Activated naive CD4-positive, alpha-beta T cell treated with anti-CD3 and anti-CD28 coated beads for 36 hours (primary cell): ENCODE measurements at regions of chr9 and their contacts with region 1.

Region 1: DNA sequence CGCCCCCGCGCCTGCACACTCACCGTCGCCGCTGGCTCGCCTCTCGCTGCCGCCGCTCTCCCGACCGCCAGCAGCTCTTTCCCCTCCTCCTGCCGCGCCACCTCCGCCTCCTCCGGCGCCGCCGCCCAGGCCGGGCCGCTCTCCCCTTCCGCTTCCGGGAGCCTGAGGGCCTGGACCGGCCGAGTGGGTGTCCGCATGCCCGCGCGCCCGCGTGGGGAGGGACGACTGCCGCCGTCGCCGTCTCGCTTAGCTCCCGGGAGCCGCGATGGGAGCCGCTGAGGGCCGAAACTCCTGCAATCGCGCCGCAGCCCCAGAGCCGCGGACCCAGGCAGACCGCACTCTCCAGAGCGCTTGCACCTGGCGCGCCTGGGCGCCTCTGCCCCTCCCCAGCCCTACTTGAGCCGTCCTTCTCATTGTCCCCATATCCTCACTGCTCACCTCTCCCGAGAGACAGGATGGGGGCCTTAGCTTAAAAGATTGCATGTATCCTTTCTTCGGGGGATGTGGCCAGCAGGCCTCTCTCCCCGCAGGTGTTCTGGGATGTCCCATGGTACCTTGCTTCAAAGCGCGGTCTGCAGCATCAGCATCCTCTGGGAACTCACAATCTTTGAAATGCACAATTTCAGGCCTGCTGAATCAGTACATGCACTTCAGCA is at the start of gene ZDHHC21:
- DNase-seq: peak; percentile 62
- H3K4me3 Mint-ChIP-seq: peak within 1 kb of the TSS; percentile 89
- H3K27ac Mint-ChIP-seq: peak within 1 kb of the TSS; percentile 79
- H3K4me1 Mint-ChIP-seq: peaks cover 31% of the 10 kb centered on the region
- H3K27me3 Mint-ChIP-seq: peaks cover 8% of the 10 kb centered on the region
- total RNA-seq, gene ZDHHC21: 3.5 to 3.8 TPM

Region 2: GRCh38 chr9:14322211-14323082 is 370.9 kb before region 1 on chr9:
- CTCF ChIA-PET with region 1: no interaction called
- intact Hi-C with region 1: loop called (anchors 2 kb)
- DNase-seq: peak; percentile 82
- H3K4me3 Mint-ChIP-seq: peak overlapping the region; percentile 77
- H3K27ac Mint-ChIP-seq: no peak overlapping the region
- H3K4me1 Mint-ChIP-seq: peaks cover 8% of the 10 kb centered on the region
- H3K27me3 Mint-ChIP-seq: peaks cover 42% of the 10 kb centered on the region

Region 3: GRCh38 chr9:14616188-14616982 is 76.9 kb before region 1 on chr9:
- CTCF ChIA-PET with region 1: no interaction called
- intact Hi-C with region 1: loop called (anchors 2 kb)
- DNase-seq: no peak
- H3K4me3 Mint-ChIP-seq: no peak overlapping the region
- H3K27ac Mint-ChIP-seq: no peak overlapping the region
- H3K4me1 Mint-ChIP-seq: no peaks in the 10 kb centered on the region
- H3K27me3 Mint-ChIP-seq: no peaks in the 10 kb centered on the region

Region 4: DNA sequence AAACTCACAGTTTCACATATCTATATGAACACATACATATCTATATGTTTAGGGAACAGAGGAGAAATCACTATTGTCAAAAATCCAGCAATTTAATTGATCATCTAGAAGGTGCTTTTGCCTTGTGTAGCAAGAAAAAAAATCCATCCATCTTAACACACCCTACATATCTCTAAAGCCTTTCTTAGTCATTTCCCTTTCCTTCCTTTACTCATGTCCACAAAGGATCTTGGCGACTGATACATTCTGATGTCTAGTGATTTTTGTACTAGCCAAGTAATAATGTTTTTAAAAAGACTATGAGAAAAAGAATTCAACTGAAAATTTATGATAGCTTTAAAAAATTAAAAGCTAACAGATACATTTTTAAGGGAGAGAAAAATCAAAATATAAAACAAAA is 22.6 kb before region 1 on chr9:
- CTCF ChIA-PET with region 1: no interaction called
- intact Hi-C with region 1: loop called (anchors 2 kb)
- DNase-seq: no peak
- H3K4me3 Mint-ChIP-seq: no peak overlapping the region
- H3K27ac Mint-ChIP-seq: no peak overlapping the region
- H3K4me1 Mint-ChIP-seq: peaks cover 9% of the 10 kb centered on the region
- H3K27me3 Mint-ChIP-seq: no peaks in the 10 kb centered on the region

Region 5: GRCh38 chr9:14768405-14769229 is 75.3 kb after region 1 on chr9:
- CTCF ChIA-PET with region 1: interaction called, 4 read pairs
- intact Hi-C with region 1: loop called (anchors 2 kb)
- DNase-seq: no peak
- H3K4me3 Mint-ChIP-seq: no peak overlapping the region
- H3K27ac Mint-ChIP-seq: no peak overlapping the region
- H3K4me1 Mint-ChIP-seq: peaks cover 2% of the 10 kb centered on the region
- H3K27me3 Mint-ChIP-seq: peaks cover 15% of the 10 kb centered on the region

Region 6: DNA sequence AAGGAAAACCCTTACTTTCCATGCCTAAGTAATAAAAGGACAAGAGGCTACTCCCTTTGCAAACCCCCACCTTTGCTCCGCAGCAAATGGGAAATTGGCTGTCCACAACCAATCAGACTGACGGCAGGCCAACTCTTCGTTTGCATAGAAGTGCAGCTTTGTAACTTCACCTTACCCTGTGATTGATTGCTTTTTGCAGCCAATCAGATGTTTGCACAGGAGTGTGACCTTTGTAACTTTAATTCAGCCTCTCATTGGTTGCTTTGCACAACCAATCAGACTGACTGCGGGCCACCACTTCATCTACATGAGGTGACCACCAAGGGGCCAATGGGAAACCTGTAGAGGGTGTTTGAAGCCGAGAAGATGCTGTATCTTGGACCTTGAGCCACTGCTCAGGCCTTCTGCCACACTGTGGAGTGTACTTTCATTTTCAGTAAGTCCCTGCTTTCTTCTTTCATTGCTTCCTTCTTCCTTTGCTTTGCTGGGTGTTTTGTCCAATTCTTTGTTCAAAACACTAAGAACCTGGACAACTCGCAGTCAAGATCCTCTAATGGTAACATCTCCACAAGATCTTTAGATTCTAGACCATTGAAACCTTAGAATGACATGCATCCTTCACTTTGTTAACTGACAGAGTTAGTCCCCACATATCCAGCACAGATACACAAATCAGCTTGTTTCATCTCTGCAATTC is 268.2 kb after region 1 on chr9:
- CTCF ChIA-PET with region 1: no interaction called
- intact Hi-C with region 1: no loop called
- DNase-seq: peak; percentile 5
- H3K4me3 Mint-ChIP-seq: no peak overlapping the region
- H3K27ac Mint-ChIP-seq: no peak overlapping the region
- H3K4me1 Mint-ChIP-seq: peaks cover 28% of the 10 kb centered on the region
- H3K27me3 Mint-ChIP-seq: no peaks in the 10 kb centered on the region

Region 7: GRCh38 chr9:15135164-15135792 is 441.9 kb after region 1 on chr9:
- CTCF ChIA-PET with region 1: no interaction called
- intact Hi-C with region 1: loop called (anchors 10 kb)
- DNase-seq: peak; percentile 58
- H3K4me3 Mint-ChIP-seq: no peak overlapping the region
- H3K27ac Mint-ChIP-seq: no peak overlapping the region
- H3K4me1 Mint-ChIP-seq: peaks cover 1% of the 10 kb centered on the region
- H3K27me3 Mint-ChIP-seq: no peaks in the 10 kb centered on the region